T-cell (primary cell): ENCODE measurements at regions of chr19 and their contacts with region 1.

Region 1: DNA sequence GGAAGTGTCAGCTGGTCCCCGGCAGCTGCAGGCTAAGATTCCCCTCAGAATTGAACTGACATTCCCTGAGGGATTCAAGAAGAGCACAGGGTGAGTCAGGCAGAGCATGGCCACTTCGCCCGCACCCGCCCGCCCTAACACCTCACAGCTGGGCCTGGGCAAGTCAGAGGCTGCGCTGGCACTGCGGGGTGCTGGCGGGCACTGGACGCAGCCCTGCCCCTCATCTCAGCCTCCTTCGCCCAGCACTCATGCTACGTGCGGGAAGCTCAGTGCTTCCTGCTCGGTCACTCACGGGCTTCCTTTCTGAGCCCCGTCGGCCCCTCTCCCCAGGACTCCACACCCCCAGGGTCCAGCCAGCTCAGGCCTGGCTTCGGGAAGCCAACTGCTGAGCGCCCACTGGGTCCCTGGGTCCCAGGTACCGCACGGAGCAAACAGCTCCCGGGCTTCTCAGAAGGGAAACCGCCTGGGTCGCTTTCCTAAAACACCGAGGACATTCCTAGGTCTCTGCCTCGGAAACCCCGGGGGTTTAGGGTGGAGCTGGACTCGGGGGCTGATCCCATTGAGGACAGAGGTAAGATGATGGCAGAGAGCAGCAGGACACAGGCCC is 56.8 kb downstream of the MLLT1 start:
- DNase-seq: no peak
- ATAC-seq: no peak
- H3K4me3 ChIP-seq: no peak overlapping the region
- H3K4me3 Mint-ChIP-seq: no peak overlapping the region
- H3K27ac ChIP-seq: no peak overlapping the region
- H3K27ac Mint-ChIP-seq: no peak overlapping the region
- H3K4me1 ChIP-seq: peaks cover 0 to 7% of the 10 kb centered on the region in 2 experiments
- H3K4me1 Mint-ChIP-seq: peaks cover 0 to 2% (median 0%) of the 10 kb centered on the region in 3 donors
- H3K27me3 ChIP-seq: no peaks in the 10 kb centered on the region
- H3K27me3 Mint-ChIP-seq: no peaks in the 10 kb centered on the region

Region 2: DNA sequence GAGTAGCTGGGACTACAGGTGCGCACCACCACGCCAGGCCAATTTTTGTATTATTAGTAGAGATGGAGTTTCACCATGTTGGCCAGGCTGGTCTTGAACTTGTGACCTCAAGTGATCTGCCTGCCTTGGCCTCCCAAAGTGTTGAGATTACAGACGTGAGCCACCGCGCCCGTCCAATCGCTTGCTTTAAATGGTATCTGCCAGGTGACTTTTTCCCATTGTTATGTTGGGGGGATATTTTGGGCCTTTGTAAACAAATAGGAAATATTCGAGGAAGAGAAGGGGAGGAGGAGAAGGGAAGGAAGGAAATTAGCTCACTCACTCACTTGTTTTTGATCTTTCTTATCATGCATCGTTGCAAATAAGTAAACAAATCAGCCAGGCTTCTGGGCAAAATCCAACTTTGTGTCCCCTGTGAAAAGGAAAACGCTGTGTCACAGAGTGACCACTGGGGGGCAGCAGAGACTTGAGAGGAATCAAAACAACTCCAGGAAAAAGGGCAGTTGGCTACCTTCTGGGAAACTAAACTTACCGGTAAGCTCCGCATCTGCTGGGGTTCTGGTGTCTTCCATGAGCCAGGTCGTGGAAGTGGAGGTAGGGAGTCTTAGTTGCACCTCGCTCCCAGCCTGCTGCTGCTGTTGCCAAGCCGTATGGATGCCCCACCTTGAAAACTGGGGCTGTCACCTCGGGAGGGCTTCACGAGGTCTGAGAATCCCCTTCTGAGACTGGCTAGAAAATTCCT is 235.7 kb before region 1 on chr19:
- CTCF ChIA-PET with region 1: interaction called in 1 of 2 experiments, 11 read pairs
- POLR2A ChIA-PET with region 1: no interaction called
- DNase-seq: peak; percentile 20 to 84 (median 61)
- ATAC-seq: peak; percentile 63 to 70 (median 67)
- H3K4me3 ChIP-seq: peak overlapping the region; percentile 35 to 42
- H3K4me3 Mint-ChIP-seq: peak overlapping the region; percentile 74 to 76 (median 76)
- H3K27ac ChIP-seq: no peak overlapping the region
- H3K27ac Mint-ChIP-seq: peak overlapping the region; percentile 20 to 68
- H3K4me1 ChIP-seq: peaks cover 4 to 29% of the 10 kb centered on the region in 2 experiments
- H3K4me1 Mint-ChIP-seq: peaks cover 22 to 33% (median 24%) of the 10 kb centered on the region in 3 donors
- H3K27me3 ChIP-seq: peaks cover 0 to 8% of the 10 kb centered on the region in 2 experiments
- H3K27me3 Mint-ChIP-seq: no peaks in the 10 kb centered on the region